Kidney (tissue), 22 donors: ENCODE measurements at regions of chr12 and their contacts with region 1.

Region 1: GRCh38 chr12:48795480-48796455 is 6.9 kb upstream of the ADCY6 start:
- DNase-seq: peak in 4 of 5 donors; percentile 77 to 91 (median 88)
- H3K4me3 ChIP-seq: no peak overlapping the region
- H3K27ac ChIP-seq: peak overlapping the region in 1 of 2 donors; percentile 20
- H3K4me1 ChIP-seq: peaks cover 0 to 2% (median 0%) of the 10 kb centered on the region in 3 donors
- H3K27me3 ChIP-seq: no peaks in the 10 kb centered on the region
- CTCF ChIP-seq: peak; percentile 100

Region 2: DNA sequence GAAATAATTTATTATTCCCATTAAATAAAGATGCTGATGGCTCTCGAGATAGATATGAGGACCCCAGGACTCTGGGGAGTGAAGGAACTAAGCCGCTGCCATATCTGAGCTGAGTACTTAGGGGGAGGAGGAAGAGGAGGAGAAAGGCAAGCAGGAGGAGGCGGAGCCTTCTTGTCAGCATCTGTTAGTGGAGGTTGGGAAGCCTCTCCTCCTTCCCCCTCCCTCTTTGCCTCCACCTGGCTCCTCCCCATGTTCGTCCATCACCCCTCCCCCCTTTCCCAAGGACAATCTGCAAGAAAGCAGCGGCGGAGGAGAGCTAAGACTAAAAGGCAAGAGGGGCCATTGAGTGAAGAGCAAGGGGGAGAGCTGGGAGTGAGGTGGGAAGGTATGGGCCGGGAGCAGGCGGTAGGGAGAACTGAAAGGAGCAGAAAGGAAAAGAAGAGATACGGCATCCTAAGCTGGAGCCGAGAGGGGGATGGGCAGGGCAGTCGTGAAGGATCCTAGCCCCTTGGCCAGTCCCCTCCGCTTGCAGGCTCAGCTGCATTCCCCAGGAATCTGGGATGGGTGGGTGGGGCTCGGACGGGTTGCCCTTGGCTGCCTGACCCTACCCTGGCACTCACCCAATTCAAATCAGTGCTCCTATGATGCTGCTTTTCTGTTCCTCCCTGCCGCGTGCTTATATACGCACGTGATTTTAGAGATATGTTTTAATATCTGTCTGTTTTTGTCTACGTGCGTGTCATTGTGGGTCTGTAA is 676.5 kb before region 1 on chr12 and contains the start of gene PFKM:
- intact Hi-C with region 1: no loop called
- DNase-seq: peak; percentile 90 to 97 (median 93)
- H3K4me3 ChIP-seq: peak within 1 kb of the TSS; percentile 91 to 93 (median 92)
- H3K27ac ChIP-seq: peak within 1 kb of the TSS; percentile 37 to 45
- H3K4me1 ChIP-seq: no peaks in the 10 kb centered on the region
- H3K27me3 ChIP-seq: no peaks in the 10 kb centered on the region
- CTCF ChIP-seq: no peak
- total RNA-seq, gene PFKM: 67.7 TPM

Region 3: DNA sequence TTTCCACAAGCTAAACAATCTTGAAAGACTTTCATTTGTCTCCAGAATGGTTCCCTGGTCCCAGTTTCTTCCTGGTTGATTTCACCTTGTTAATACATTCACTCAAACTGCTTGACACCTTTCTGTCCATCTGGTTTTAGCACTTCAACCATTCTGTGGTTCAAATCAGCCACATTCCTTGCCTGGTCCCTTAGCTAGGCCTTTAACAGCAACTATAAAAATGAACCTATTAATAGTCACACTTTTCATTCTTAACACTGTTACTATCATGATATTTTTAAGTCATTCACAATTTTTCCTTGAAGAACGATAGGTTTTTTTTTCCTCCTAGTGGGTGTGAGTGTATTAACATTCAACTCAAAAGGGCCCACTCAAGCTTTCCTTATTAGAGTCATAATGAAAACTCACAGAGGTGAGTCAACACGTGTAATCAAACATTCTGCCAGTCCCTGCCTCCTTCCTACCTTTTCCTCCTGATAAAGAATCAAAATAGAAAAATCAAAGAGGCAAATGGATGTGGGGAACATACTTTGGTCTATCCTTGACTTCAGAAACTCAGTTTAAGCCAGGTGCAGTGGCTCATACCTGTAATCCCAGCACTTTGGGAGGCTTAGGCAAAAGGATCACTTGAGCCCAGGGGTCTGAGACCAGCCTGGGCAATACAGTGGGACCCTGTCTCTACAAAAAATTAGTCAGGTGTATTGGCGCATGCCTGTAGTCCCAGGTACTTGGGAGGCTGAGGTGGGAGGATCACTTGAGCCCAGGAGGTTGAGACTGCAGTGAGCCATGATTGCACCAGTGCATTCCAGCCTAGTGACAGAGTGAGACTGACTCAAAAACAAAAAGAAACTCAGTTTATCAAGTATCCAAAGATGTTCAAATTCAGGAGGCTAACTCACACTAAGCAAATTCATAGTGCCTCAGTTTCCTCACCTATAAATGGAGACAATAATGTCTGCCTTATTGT is 44.7 kb before region 1 on chr12:
- intact Hi-C with region 1: loop called (anchors 5 kb)
- DNase-seq: no peak
- H3K4me3 ChIP-seq: no peak overlapping the region
- H3K27ac ChIP-seq: no peak overlapping the region
- H3K4me1 ChIP-seq: no peaks in the 10 kb centered on the region
- H3K27me3 ChIP-seq: no peaks in the 10 kb centered on the region
- CTCF ChIP-seq: no peak